Mucosa of descending colon (tissue), 3 donors: ENCODE measurements at regions of chr5 and their contacts with region 1.

Region 1: DNA sequence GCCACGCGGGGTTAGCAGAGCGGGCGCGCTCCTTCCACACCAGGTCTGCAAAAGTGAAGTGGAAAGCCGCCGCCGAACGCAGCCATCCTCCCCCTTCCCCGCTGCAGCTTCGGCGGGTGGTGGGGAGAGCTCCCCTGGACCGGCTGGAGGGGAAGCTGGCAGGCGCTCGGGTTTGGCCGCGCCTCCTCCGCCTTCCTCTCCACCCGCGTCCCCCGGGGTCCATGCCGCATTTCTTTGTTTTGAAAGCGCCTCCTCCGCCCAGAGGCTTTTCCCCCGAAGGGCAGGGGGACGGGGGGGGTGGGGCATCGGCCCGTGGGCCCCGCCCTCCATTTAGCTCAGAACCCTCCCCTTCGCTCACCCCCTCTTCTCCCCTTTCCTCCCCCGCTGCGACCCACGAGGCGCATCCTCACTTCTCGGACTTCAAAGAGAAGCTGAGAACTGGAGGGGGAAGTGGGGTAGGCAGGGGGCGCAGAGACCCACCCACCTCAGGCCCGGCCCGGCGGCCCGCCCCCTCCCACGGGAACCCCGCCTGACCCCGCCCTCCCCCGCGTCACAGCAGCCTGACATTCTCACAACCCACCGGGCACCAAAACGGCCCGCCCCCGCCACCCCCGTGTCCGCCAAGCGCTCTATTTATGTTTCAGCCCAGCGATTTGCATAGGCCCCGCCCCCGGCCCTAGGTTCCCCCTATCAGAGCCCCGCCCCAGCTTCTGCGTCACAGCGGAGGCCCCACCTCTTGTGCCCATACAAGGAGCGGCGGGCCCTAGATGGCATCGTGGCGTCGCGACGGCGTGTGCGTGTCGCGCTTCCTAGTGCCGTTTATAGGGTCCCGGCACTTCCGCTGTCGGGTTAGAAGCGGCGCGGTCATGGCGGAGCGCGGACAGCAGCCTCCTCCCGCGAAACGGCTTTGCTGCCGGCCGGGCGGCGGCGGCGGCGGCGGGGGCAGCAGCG is at the start of gene ZSWIM6:
- DNase-seq: peak; percentile 99 to 100 (median 100)
- ATAC-seq: peak; percentile 82
- H3K4me3 ChIP-seq: peak within 1 kb of the TSS; percentile 94
- H3K4me1 ChIP-seq: peaks cover 25% of the 10 kb centered on the region
- CTCF ChIP-seq: no peak
- total RNA-seq, gene ZSWIM6: 26.2 to 39.4 (median 27.8) TPM

Region 2: GRCh38 chr5:61290791-61291210 is 40.9 kb before region 1 on chr5:
- intact Hi-C with region 1: no loop called
- DNase-seq: peak in 2 of 3 donors; percentile 50 to 80
- ATAC-seq: peak; percentile 77
- H3K4me3 ChIP-seq: no peak overlapping the region
- H3K4me1 ChIP-seq: peaks cover 30% of the 10 kb centered on the region
- CTCF ChIP-seq: no peak

Region 3: DNA sequence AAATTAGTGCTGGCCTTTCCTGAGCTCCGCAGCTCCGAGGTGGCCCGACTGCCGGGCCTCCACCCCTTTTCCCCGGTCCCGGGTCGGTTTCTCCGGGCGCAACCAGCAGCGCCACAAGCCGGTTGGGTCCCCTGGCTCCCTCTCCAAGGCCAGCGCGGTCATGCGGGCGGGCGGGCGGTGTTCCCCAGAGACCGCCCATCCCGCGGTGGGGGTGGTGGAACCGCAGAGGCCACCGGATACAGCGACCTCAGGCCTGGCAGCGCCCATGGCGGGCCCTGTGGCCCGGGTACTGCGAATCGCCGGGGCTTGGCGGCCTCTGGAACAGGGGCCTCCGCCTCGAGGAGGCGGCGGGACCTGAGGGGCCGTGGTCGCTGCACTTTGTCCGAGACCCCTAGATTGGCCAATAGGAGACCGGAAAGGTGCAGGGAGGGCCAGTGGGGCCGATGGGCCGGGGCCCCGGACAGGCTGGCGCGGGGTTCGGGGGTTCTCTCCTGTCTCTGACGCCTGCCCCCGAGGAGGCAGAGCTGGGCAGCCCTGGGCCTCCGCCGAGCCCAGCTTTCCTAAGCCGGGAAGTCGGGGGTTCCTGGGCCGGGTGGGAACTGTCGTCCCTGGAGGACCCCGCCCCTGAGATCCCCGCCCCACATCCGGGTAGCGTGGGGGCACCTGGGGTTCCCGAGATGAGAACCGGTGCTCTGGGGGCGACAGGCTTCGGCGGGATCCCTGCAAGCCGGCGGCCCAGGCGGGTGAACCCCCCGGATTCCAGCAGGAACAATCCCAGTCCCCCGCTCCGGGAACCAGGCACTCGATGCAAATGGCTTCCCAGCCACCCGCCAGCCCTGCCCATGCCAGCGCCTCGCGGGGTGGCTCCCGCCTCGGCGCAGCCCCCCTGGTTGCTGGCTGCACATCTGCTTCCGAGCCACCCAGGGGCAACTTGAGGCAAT is 294.3 kb after region 1 on chr5:
- intact Hi-C with region 1: loop called in 1 of 2 experiments (anchors 10 kb)
- DNase-seq: peak; percentile 80 to 90 (median 83)
- ATAC-seq: peak; percentile 97
- H3K4me3 ChIP-seq: peak overlapping the region; percentile 37
- H3K4me1 ChIP-seq: no peaks in the 10 kb centered on the region
- CTCF ChIP-seq: no peak